MCF 10A (cell line): ENCODE measurements at regions of chr11 and their contacts with region 1.

Region 1: GRCh38 chr11:123020968-123021367 is 39.3 kb upstream of the BSX start:
- DNase-seq: peak; percentile 63
- H3K4me3 Mint-ChIP-seq: no peak overlapping the region
- H3K27ac Mint-ChIP-seq: no peak overlapping the region
- H3K4me1 Mint-ChIP-seq: no peaks in the 10 kb centered on the region
- H3K27me3 Mint-ChIP-seq: peaks cover 37% of the 10 kb centered on the region
- CTCF ChIP-seq: peak; percentile 51

Region 2: GRCh38 chr11:122584670-122585069 is 436.3 kb before region 1 on chr11:
- CTCF ChIA-PET with region 1: interaction called, 4 read pairs
- POLR2A ChIA-PET with region 1: no interaction called
- intact Hi-C with region 1: loop called (anchors 5 kb)
- DNase-seq: no peak
- H3K4me3 Mint-ChIP-seq: no peak overlapping the region
- H3K27ac Mint-ChIP-seq: no peak overlapping the region
- H3K4me1 Mint-ChIP-seq: peaks cover 15% of the 10 kb centered on the region
- H3K27me3 Mint-ChIP-seq: peaks cover 5% of the 10 kb centered on the region
- CTCF ChIP-seq: no peak

Region 3: DNA sequence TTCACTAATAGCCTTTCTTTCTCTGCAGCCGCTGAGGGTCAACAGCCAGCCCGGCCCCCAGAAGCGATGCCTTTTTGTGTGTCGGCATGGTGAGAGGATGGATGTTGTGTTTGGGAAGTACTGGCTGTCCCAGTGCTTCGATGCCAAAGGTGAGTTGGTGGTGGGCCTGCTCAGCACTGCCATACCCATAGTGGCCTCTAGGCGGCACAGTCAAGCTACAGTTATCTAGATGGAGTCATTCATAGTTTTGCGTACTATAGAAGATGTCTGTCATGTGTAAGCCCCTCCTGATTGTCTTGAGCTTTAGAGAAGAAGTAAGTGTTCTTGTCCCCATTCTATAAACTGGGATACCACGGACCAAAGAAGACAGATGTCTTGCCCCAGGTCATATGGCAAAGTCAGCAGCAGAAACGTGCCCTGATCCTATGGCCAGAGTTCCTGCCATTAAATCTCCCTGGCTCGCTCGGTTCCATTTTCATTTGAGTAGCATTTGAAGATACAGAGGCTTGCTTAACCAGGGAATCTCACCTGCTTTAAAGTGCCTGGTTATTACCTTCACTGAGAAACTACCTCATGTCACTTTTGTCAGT is 224.7 kb before region 1 on chr11:
- CTCF ChIA-PET with region 1: interaction called, 4 read pairs
- POLR2A ChIA-PET with region 1: no interaction called
- intact Hi-C with region 1: loop called (anchors 5 kb)
- DNase-seq: peak; percentile 62
- H3K4me3 Mint-ChIP-seq: no peak overlapping the region
- H3K27ac Mint-ChIP-seq: no peak overlapping the region
- H3K4me1 Mint-ChIP-seq: peaks cover 10% of the 10 kb centered on the region
- H3K27me3 Mint-ChIP-seq: no peaks in the 10 kb centered on the region
- CTCF ChIP-seq: peak; percentile 94

Region 4: DNA sequence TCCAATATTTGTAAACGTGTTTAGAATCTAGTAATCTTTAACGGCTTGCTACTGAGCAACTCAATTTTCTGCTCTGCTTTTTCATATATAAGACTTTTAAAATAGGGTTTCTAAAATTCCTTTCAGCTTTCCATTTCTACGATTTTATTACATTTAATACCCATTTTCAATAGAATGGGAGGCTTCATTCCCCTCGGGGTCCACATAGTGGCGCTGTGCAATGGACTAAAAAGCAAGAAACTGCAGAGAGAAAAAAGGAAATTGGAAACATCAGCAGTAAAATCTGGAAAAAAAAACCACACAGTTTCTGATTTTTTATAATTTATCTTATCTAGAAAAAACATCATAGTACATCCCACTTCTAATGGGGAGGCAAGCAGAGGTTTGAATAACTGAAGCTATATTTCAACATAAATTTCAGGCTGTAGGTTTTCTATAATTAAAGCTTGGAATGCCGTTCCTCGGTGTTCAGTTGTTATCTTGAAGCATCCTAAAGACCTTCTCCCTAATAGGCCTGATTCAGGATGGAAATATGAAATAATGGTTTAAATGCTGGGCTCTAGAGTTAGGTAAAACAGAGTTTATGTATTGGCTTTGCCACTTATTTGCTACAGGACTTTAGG is 157.2 kb before region 1 on chr11:
- CTCF ChIA-PET with region 1: interaction called, 294 read pairs
- POLR2A ChIA-PET with region 1: interaction called, 6 read pairs
- intact Hi-C with region 1: loop called (anchors 1 kb)
- DNase-seq: peak; percentile 53
- H3K4me3 Mint-ChIP-seq: no peak overlapping the region
- H3K27ac Mint-ChIP-seq: no peak overlapping the region
- H3K4me1 Mint-ChIP-seq: no peaks in the 10 kb centered on the region
- H3K27me3 Mint-ChIP-seq: peaks cover 32% of the 10 kb centered on the region
- CTCF ChIP-seq: peak; percentile 84

Region 5: GRCh38 chr11:123033895-123034294 is 12.9 kb after region 1 on chr11:
- CTCF ChIA-PET with region 1: interaction called, 11 read pairs
- POLR2A ChIA-PET with region 1: interaction called, 3 read pairs
- intact Hi-C with region 1: no loop called
- DNase-seq: no peak
- H3K4me3 Mint-ChIP-seq: no peak overlapping the region
- H3K27ac Mint-ChIP-seq: no peak overlapping the region
- H3K4me1 Mint-ChIP-seq: no peaks in the 10 kb centered on the region
- H3K27me3 Mint-ChIP-seq: no peaks in the 10 kb centered on the region
- CTCF ChIP-seq: no peak

Region 6: GRCh38 chr11:123054301-123055065 is 33.5 kb after region 1 on chr11:
- CTCF ChIA-PET with region 1: interaction called, 67 read pairs
- POLR2A ChIA-PET with region 1: interaction called, 3 read pairs
- intact Hi-C with region 1: no loop called
- DNase-seq: peak; percentile 72
- H3K4me3 Mint-ChIP-seq: no peak overlapping the region
- H3K27ac Mint-ChIP-seq: no peak overlapping the region
- H3K4me1 Mint-ChIP-seq: peaks cover 27% of the 10 kb centered on the region
- H3K27me3 Mint-ChIP-seq: no peaks in the 10 kb centered on the region
- CTCF ChIP-seq: peak; percentile 59